ENCODE measurements at regions of chr4 and their contacts with region 1.

Region 1: DNA sequence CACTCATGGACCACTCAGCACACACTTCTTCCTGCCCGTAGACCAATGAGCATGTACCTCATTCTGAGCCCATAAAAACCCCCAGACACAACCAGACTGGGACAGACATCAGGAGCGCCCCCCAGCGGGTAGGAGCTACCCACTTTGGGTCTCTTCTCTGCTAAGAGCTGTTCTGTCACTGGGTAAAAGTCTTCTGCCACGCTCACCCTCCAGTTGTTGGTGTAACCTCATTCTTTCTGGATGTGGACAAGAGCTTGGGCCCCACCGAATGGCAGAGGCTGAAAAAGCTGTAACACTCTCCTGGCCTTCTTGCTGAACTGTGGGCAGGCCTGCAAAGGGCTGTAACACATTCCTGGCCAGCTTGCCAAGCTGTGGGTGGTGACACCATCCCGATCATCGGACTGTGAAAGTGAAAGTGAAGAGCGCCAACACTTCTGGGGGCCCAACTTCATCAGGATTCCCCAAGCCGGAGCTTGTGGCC is 137.6 kb downstream of the TECRL start:
- DNase-seq: peak; percentile 29 to 75 (median 52)
- ATAC-seq: peak; percentile 73 to 89 (median 87)
- H3K4me3 ChIP-seq: peak overlapping the region in 10 of 12 donors; percentile 5 to 47 (median 33)
- H3K27ac ChIP-seq: peak overlapping the region in 8 of 12 donors; percentile 11 to 68 (median 49)
- H3K4me1 ChIP-seq: peaks cover 0 to 12% (median 0%) of the 10 kb centered on the region in 12 donors
- H3K27me3 ChIP-seq: no peaks in the 10 kb centered on the region
- CTCF ChIP-seq: peak in 9 of 12 donors; percentile 9 to 35 (median 27)
- POLR2A ChIP-seq: no peak

Region 2: DNA sequence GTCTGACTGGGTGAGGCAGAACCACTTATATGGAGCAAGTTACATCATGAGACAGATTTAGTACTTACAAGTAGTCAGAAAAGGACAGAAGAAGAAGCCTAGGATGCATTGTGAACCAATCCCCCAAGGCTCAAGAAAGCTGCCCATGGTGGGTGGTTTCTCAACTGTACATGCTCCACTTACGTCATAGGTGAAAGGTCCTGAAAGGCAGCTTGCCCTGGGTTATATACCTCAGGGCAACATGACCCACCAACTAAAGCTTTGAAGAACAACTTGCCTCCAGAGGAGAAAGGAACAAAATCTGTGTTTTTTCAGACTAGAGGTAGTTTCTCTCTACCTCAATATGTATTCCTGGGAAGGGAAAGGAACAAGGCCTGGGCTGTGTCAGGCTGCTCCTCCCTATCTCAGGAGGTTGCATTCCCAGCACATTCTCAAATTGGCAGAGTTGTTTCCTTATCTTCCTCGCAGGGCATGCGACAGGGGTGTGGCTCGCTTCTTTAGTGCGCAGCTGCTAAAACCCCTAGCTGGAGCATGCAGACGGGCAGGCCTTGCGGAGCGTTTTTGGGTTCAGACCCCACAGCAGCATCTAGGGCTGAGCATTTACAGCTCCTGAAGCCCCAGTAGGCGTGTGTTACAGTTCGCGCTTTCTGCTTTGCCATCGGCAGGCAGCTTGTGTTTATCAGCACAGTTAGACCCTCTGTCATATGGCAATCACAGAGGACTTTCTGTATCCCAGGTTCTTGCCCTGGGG is 254.9 kb before region 1 on chr4:
- intact Hi-C with region 1: no loop called
- DNase-seq: peak in 1 of 5 donors; percentile 21
- ATAC-seq: peak in 2 of 4 donors; percentile 45 to 72
- H3K4me3 ChIP-seq: no peak overlapping the region
- H3K27ac ChIP-seq: no peak overlapping the region
- H3K4me1 ChIP-seq: no peaks in the 10 kb centered on the region
- H3K27me3 ChIP-seq: no peaks in the 10 kb centered on the region
- CTCF ChIP-seq: no peak
- POLR2A ChIP-seq: no peak

Region 3: GRCh38 chr4:64200001-64200555 is 71.6 kb before region 1 on chr4:
- intact Hi-C with region 1: no loop called
- DNase-seq: no peak
- ATAC-seq: no peak
- H3K4me3 ChIP-seq: no peak overlapping the region
- H3K27ac ChIP-seq: no peak overlapping the region
- H3K4me1 ChIP-seq: no peaks in the 10 kb centered on the region
- H3K27me3 ChIP-seq: no peaks in the 10 kb centered on the region
- CTCF ChIP-seq: no peak
- POLR2A ChIP-seq: no peak

Region 4: GRCh38 chr4:64545593-64545992 is 274.0 kb after region 1 on chr4:
- intact Hi-C with region 1: loop called in 2 of 10 experiments (anchors 5 kb)
- DNase-seq: peak in 1 of 5 donors; percentile 31
- ATAC-seq: no peak
- H3K4me3 ChIP-seq: no peak overlapping the region
- H3K27ac ChIP-seq: no peak overlapping the region
- H3K4me1 ChIP-seq: no peaks in the 10 kb centered on the region
- H3K27me3 ChIP-seq: no peaks in the 10 kb centered on the region
- CTCF ChIP-seq: no peak
- POLR2A ChIP-seq: no peak